ENCODE measurements at regions of chr11 and their contacts with region 1.

Region 1: DNA sequence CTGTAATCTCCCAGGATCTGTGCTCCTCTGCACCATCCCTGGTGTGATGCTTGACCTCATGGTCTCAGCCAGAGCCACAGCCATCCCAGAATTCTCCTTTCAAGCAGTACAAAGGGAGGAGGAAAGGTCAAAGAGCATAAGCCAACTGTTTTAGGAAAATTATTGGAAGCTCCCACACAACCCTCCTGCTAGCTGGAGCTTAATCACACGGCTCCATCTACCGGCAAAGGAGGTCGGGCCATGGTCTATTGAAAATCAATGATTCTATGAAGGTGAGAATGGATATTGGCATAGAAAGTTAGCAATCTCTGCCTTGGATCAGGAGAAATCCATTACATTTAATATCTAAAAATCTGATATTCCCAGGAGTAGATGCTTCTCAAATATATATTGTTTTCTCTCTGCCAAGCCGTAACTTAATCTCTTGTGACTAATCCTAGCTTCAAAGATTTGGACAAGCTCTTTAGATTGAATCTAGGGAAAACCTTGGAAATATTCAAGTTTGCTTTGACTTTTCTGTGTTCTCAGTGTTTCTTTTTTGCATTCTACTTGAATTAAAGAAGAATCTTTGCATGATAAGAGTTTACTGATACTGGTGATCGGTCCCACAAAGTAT is 259.6 kb downstream of the NTM start:
- DNase-seq: no peak
- H3K4me3 ChIP-seq: no peak overlapping the region
- H3K27ac ChIP-seq: no peak overlapping the region
- H3K4me1 ChIP-seq: 0 out of 7 replicates have a peak, but pooled peaks cover 0 to 2% (median 0%) of the 10 kb centered on the region in 4 experiments
- H3K27me3 ChIP-seq: no peaks in the 10 kb centered on the region
- CTCF ChIP-seq: peak in 2 of 3 experiments; percentile 9 to 22; a peak in 2 of 4 replicates
- EP300 ChIP-seq: no peak
- POLR2A ChIP-seq: no peak
- RAD21 ChIP-seq: peak; percentile 11 to 43; a peak in 3 of 4 replicates

Region 2: GRCh38 chr11:131584785-131585592 is 45.0 kb before region 1 on chr11:
- CTCF ChIA-PET with region 1: interaction called, 10 read pairs
- POLR2A ChIA-PET with region 1: interaction called, 3 read pairs
- DNase-seq: peak; percentile 41 to 91
- H3K4me3 ChIP-seq: no peak overlapping the region
- H3K27ac ChIP-seq: no peak overlapping the region
- H3K4me1 ChIP-seq: peaks cover 3 to 12% (median 4%) of the 10 kb centered on the region in 4 experiments; a peak in 4 of 7 replicates
- H3K27me3 ChIP-seq: no peaks in the 10 kb centered on the region
- CTCF ChIP-seq: peak; percentile 87 to 91 (median 89)
- EP300 ChIP-seq: no peak; a peak in 1 of 3 replicates
- POLR2A ChIP-seq: no peak
- RAD21 ChIP-seq: peak; percentile 71 to 82